Motor neuron (in vitro differentiated cells): ENCODE measurements at regions of chr5 and their contacts with region 1.

Region 1: GRCh38 chr5:9544502-9545135 is 1.3 kb downstream of the SEMA5A start:
- ATAC-seq: peak; percentile 53 to 85 (median 76)
- H3K4me3 ChIP-seq: peak overlapping the region; percentile 33 to 50 (median 46)
- H3K27ac ChIP-seq: no peak overlapping the region
- H3K4me1 ChIP-seq: no peaks in the 10 kb centered on the region

Region 2: GRCh38 chr5:7904170-7904569 is 1640.4 kb before region 1 on chr5:
- in situ Hi-C with region 1: loop called in 1 of 9 experiments (anchors 25 kb)
- ATAC-seq: peak in 2 of 8 experiments; percentile 40 to 67
- H3K4me3 ChIP-seq: no peak overlapping the region
- H3K27ac ChIP-seq: no peak overlapping the region
- H3K4me1 ChIP-seq: no peaks in the 10 kb centered on the region

Region 3: DNA sequence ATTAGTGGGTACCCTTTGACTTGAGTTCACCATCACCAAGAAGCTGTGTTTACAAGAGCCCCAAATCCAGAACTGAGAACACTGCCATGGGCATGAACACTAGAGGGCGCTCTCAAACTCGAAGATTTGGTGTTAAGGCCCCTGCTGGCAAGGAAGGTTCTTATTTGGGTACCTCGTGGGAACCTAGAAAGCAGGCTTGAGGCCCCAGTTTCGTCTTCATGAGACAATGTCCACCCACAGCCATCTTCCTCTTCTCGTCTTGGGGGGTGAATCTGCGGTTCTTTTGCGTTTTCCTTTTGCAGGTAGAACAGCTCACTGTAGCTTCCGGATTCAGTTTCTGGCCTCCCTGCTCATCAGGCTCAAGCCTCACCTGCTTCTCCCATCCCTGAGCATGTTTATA is 182.8 kb before region 1 on chr5:
- in situ Hi-C with region 1: loop called in 1 of 9 experiments (anchors 25 kb)
- ATAC-seq: peak in 2 of 8 experiments; percentile 38 to 41
- H3K4me3 ChIP-seq: no peak overlapping the region
- H3K27ac ChIP-seq: no peak overlapping the region
- H3K4me1 ChIP-seq: peaks cover 4 to 5% of the 10 kb centered on the region in 2 donors